Colonic mucosa (tissue), 4 donors: ENCODE measurements at regions of chr7 and their contacts with region 1.

Region 1: DNA sequence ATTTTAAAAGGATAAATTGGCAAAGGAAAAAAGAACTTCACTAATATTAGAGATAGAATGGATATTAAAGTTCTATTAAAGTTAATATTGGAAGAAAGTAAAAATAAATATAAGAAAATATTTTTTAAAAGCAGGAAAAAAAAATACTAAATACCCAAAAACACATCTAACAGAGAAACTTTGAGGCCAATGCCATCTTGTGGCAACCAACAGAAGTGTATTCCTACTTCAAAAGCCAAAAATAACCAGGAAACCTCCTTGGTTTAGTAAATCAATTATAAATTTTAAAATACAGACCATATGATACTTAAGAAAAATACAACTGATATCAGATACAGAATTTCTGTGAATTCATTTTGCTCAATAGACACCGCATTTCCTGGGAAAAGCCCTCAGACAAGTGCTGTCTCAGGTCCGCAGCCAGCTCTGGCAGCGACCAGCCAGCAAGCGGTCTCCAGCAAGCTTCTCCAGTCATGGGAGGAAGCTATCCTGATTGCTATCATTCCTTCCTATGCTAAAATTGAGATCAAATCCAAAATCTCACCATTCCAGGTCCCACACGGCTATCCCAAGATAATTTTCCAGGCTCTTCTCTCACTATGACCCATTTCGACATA is 65.3 kb downstream of the LMBR1 start:
- DNase-seq: no peak
- H3K4me3 ChIP-seq: no peak overlapping the region
- H3K27ac ChIP-seq: no peak overlapping the region
- H3K4me1 ChIP-seq: no peaks in the 10 kb centered on the region
- H3K27me3 ChIP-seq: no peaks in the 10 kb centered on the region
- CTCF ChIP-seq: no peak

Region 2: DNA sequence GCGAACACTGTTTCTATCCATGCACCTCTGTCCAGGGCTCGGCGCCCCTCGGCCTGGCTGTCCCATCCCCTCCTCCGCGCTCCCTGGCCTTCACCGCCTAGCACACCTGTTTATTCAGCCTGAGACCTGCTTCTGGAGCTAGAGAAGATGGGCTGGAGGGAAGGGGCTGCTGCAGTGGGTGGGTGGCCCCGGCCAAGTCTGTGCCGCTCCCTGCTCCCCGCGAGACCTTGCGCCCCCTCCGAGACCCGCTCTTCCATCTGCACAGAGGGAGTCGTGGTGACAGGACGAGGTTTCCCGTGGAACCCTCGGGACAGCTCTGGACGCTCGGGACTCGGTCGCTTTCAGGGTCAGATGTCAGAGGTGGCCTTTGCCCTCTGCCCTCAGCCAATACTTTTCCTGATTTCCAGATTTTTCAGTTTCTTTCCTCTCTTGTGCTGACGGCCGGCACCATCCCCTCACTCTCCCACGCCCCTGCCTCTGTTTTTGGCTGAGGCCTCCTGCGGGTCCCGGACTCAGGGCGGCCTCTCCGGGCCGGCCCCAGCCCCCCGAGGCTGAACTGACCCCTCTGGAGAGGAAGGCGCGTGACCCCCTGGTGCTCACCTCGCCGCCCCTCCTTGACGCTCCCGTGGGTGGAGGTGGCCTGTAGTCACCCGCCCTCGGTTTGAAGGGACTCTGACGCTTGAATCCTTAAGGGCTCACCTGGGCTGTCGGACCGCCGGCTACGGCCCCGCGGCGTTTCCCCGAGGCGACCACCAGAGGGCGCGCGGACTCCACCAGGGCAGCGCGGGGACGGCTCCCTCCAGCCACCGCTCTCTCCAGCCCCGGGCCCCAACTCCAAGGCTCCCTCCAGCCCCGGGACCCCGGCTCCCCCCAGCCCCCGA is 1031.1 kb before region 1 on chr7:
- intact Hi-C with region 1: loop called (anchors 10 kb)
- DNase-seq: peak; percentile 63
- H3K4me3 ChIP-seq: no peak overlapping the region
- H3K27ac ChIP-seq: no peak overlapping the region
- H3K4me1 ChIP-seq: no peaks in the 10 kb centered on the region
- H3K27me3 ChIP-seq: no peaks in the 10 kb centered on the region
- CTCF ChIP-seq: peak; percentile 82

Region 3: DNA sequence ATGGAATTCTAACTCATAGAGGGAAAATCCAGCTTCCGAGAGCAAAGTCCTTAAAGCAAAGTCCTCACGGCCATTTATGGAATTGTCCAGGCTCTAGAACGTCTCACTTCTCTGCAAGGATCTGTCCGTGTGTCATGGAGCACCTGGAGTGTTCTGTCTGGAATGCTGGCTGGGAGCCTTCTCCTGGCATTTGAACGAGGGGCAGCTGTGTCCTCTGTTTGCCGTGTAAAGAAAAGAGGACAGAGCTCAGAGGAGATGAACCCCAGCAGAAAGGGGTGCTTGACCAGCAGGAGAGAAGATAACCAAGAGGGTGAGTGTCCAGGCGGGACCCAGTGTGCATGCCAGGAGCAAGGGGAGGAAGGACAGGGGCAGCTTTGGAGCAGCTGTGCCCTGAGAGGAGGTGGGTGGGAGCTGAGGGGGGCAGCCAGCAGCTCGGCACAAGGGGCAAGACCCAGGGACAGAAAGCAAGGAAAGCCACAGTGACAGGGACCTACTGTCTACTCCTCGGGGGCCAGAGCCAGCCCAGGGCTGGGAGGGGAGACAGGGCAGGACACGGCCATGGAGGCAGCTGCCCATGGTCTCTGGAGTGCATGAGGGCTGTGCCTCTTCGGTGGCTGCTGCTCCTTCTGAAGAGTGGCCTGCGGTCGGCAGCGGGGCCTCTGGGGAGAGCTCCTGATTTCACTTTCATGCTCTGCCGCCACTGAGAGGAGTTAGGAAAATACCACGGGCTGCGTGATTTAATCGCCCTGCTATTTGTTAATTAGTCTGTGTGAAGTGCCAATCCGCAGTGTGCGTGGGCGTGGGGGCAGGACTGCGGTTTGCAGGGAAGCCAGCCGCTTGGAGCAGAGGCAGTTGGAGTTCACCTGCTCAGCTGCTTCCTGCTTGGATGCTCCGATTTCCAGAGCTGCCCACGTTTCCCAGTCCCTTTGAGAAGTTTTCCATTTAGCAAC is 866.2 kb before region 1 on chr7:
- intact Hi-C with region 1: no loop called
- DNase-seq: no peak
- H3K4me3 ChIP-seq: no peak overlapping the region
- H3K27ac ChIP-seq: peak overlapping the region; percentile 0
- H3K4me1 ChIP-seq: no peaks in the 10 kb centered on the region
- H3K27me3 ChIP-seq: no peaks in the 10 kb centered on the region
- CTCF ChIP-seq: no peak

Region 4: GRCh38 chr7:157194948-157195347 is 367.3 kb after region 1 on chr7:
- intact Hi-C with region 1: no loop called
- DNase-seq: no peak
- H3K4me3 ChIP-seq: no peak overlapping the region
- H3K27ac ChIP-seq: no peak overlapping the region
- H3K4me1 ChIP-seq: no peaks in the 10 kb centered on the region
- H3K27me3 ChIP-seq: no peaks in the 10 kb centered on the region
- CTCF ChIP-seq: no peak